Naive thymus-derived CD4-positive, alpha-beta T cell (primary cell): ENCODE measurements at regions of chr6 and their contacts with region 1.

Region 1: GRCh38 chr6:131199568-131200272 is 64.5 kb downstream of the AKAP7 start:
- DNase-seq: peak; percentile 37 to 92 (median 88)
- ATAC-seq: peak; percentile 99
- H3K4me3 ChIP-seq: peak overlapping the region; percentile 44
- H3K4me3 Mint-ChIP-seq: peak overlapping the region; percentile 69 to 87 (median 82)
- H3K27ac ChIP-seq: peak overlapping the region; percentile 79
- H3K27ac Mint-ChIP-seq: peak overlapping the region; percentile 91 to 99 (median 97)
- H3K4me1 ChIP-seq: peaks cover 45 to 57% of the 10 kb centered on the region in 2 donors
- H3K4me1 Mint-ChIP-seq: peaks cover 37 to 71% (median 61%) of the 10 kb centered on the region in 7 donors
- H3K27me3 ChIP-seq: no peaks in the 10 kb centered on the region
- H3K27me3 Mint-ChIP-seq: no peaks in the 10 kb centered on the region

Region 2: DNA sequence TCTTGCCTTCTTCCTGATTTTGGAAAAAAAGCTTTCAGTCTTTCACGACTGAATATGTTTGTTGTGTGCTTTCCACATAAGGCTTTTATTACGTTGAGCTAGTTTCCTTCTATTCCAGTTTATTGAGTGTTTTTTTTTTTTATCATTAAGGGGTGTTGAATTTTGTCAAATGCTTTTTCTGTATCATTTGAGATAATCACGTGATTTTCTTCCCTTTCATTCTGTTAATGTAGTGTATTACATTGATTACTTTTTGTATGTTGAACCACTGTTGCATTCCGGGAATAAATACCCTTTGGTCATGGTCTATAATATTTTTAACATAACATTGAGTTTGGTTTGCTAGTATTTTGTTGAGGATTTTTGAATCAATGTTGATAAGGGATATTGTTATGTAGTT is 395.9 kb before region 1 on chr6:
- CTCF ChIA-PET with region 1: no interaction called
- POLR2A ChIA-PET with region 1: no interaction called
- intact Hi-C with region 1: no loop called
- DNase-seq: no peak
- ATAC-seq: no peak
- H3K4me3 ChIP-seq: no peak overlapping the region
- H3K4me3 Mint-ChIP-seq: no peak overlapping the region
- H3K27ac ChIP-seq: no peak overlapping the region
- H3K27ac Mint-ChIP-seq: peak overlapping the region in 1 of 9 donors; percentile 11
- H3K4me1 ChIP-seq: no peaks in the 10 kb centered on the region
- H3K4me1 Mint-ChIP-seq: no peaks in the 10 kb centered on the region
- H3K27me3 ChIP-seq: peaks cover 0 to 3% of the 10 kb centered on the region in 2 donors
- H3K27me3 Mint-ChIP-seq: peaks cover 0 to 18% (median 8%) of the 10 kb centered on the region in 5 donors

Region 3: DNA sequence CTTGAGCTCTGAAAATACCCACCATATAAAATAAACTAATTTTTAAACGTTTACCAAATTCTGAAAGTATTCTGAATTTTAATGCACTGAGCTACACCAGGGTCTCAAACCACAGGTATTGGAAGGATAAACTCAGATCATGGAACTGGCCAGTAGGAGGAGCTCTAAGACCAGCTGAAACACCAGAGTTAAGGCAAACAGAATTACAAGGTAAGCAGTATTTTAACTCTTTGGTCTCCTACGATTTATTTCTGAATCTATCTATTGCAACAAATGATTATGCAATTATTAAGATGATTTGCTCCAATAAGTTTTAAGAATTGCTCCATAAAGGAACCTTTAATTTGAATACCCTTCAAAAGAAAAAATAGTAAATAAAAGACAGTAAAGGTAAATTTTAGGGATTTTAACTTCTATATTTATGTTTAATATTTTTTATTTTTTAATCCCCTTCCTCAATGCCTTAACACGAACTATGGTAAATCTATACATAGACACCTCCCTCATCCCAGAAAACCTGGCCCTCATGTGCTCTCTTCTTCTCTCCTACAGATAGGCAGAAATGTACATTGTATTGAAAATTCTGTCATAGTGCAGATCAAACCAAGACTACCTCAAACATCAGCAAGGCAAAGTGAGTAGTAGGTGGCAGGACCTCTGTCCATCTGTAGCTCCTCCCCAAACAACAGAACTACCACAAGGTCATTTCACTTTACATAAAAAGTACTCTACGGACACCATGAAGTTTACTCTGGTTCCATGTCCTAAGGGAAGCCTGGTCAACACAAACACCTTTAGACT is 314.1 kb before region 1 on chr6:
- CTCF ChIA-PET with region 1: no interaction called
- POLR2A ChIA-PET with region 1: interaction called, 3 read pairs
- intact Hi-C with region 1: loop called (anchors 1 kb)
- DNase-seq: peak; percentile 27 to 82 (median 73)
- ATAC-seq: peak; percentile 97
- H3K4me3 ChIP-seq: no peak overlapping the region
- H3K4me3 Mint-ChIP-seq: no peak overlapping the region
- H3K27ac ChIP-seq: no peak overlapping the region
- H3K27ac Mint-ChIP-seq: peak overlapping the region in 1 of 9 donors; percentile 3
- H3K4me1 ChIP-seq: no peaks in the 10 kb centered on the region
- H3K4me1 Mint-ChIP-seq: no peaks in the 10 kb centered on the region
- H3K27me3 ChIP-seq: no peaks in the 10 kb centered on the region
- H3K27me3 Mint-ChIP-seq: no peaks in the 10 kb centered on the region

Region 4: GRCh38 chr6:131182991-131183425 is 16.7 kb before region 1 on chr6:
- CTCF ChIA-PET with region 1: interaction called, 36 read pairs
- POLR2A ChIA-PET with region 1: interaction called, 26 read pairs
- intact Hi-C with region 1: loop called (anchors 1 kb)
- DNase-seq: peak in 8 of 9 donors; percentile 6 to 57 (median 47)
- ATAC-seq: peak; percentile 83
- H3K4me3 ChIP-seq: no peak overlapping the region
- H3K4me3 Mint-ChIP-seq: peak overlapping the region; percentile 10 to 85 (median 72)
- H3K27ac ChIP-seq: no peak overlapping the region
- H3K27ac Mint-ChIP-seq: peak overlapping the region; percentile 86 to 98 (median 94)
- H3K4me1 ChIP-seq: peaks cover 0 to 8% of the 10 kb centered on the region in 2 donors
- H3K4me1 Mint-ChIP-seq: peaks cover 5 to 22% (median 17%) of the 10 kb centered on the region in 7 donors
- H3K27me3 ChIP-seq: no peaks in the 10 kb centered on the region
- H3K27me3 Mint-ChIP-seq: no peaks in the 10 kb centered on the region

Region 5: GRCh38 chr6:131281471-131282270 is 82.0 kb after region 1 on chr6:
- CTCF ChIA-PET with region 1: interaction called, 33 read pairs
- POLR2A ChIA-PET with region 1: interaction called, 66 read pairs
- intact Hi-C with region 1: loop called (anchors 1 kb)
- DNase-seq: peak; percentile 24 to 89 (median 83)
- ATAC-seq: peak; percentile 95
- H3K4me3 ChIP-seq: peak overlapping the region; percentile 28
- H3K4me3 Mint-ChIP-seq: peak overlapping the region; percentile 75 to 91 (median 83)
- H3K27ac ChIP-seq: peak overlapping the region; percentile 80
- H3K27ac Mint-ChIP-seq: peak overlapping the region; percentile 96 to 99 (median 98)
- H3K4me1 ChIP-seq: peaks cover 17 to 49% of the 10 kb centered on the region in 2 donors
- H3K4me1 Mint-ChIP-seq: peaks cover 22 to 93% (median 82%) of the 10 kb centered on the region in 7 donors
- H3K27me3 ChIP-seq: no peaks in the 10 kb centered on the region
- H3K27me3 Mint-ChIP-seq: no peaks in the 10 kb centered on the region

Region 6: DNA sequence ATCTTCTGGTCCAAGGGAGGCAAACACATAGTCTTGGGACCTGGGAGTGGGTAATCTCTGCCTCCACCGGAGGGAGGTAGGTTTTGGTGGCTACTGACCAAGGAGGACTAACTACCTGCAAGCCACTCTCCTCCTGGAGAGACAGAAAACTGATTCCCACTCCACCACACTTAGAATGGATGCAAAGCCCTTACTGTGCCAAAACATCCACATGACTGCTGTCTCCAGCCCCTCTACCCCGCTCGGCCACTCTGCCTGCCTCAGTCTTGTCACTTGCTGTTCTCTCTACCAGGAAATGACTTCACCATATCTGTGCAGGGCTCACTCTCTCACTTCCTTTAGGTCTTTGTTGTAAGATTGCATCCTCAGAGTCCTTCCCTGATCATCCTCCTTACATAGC is 243.8 kb after region 1 on chr6:
- CTCF ChIA-PET with region 1: interaction called, 3 read pairs
- POLR2A ChIA-PET with region 1: interaction called, 3 read pairs
- intact Hi-C with region 1: loop called (anchors 2 kb)
- DNase-seq: peak in 7 of 9 donors; percentile 38 to 53 (median 49)
- ATAC-seq: peak; percentile 80
- H3K4me3 ChIP-seq: peak overlapping the region; percentile 70
- H3K4me3 Mint-ChIP-seq: peak overlapping the region; percentile 82 to 97 (median 92)
- H3K27ac ChIP-seq: peak overlapping the region; percentile 60
- H3K27ac Mint-ChIP-seq: peak overlapping the region; percentile 85 to 97 (median 93)
- H3K4me1 ChIP-seq: peaks cover 0 to 18% of the 10 kb centered on the region in 2 donors
- H3K4me1 Mint-ChIP-seq: peaks cover 23 to 91% (median 75%) of the 10 kb centered on the region in 7 donors
- H3K27me3 ChIP-seq: no peaks in the 10 kb centered on the region
- H3K27me3 Mint-ChIP-seq: no peaks in the 10 kb centered on the region

Region 7: GRCh38 chr6:131532580-131533039 is 332.9 kb after region 1 on chr6:
- CTCF ChIA-PET with region 1: interaction called, 78 read pairs
- POLR2A ChIA-PET with region 1: interaction called, 88 read pairs
- intact Hi-C with region 1: loop called (anchors 1 kb)
- DNase-seq: peak in 1 of 9 donors; percentile 34
- ATAC-seq: peak; percentile 31
- H3K4me3 ChIP-seq: no peak overlapping the region
- H3K4me3 Mint-ChIP-seq: peak overlapping the region in 4 of 10 donors; percentile 7 to 49 (median 24)
- H3K27ac ChIP-seq: peak overlapping the region; percentile 51
- H3K27ac Mint-ChIP-seq: peak overlapping the region; percentile 1 to 94 (median 85)
- H3K4me1 ChIP-seq: peaks cover 4 to 34% of the 10 kb centered on the region in 2 donors
- H3K4me1 Mint-ChIP-seq: peaks cover 31 to 71% (median 62%) of the 10 kb centered on the region in 7 donors
- H3K27me3 ChIP-seq: no peaks in the 10 kb centered on the region
- H3K27me3 Mint-ChIP-seq: peaks cover 0 to 23% (median 4%) of the 10 kb centered on the region in 5 donors

Region 8: GRCh38 chr6:131909408-131910218 is 709.9 kb after region 1 on chr6:
- CTCF ChIA-PET with region 1: no interaction called
- POLR2A ChIA-PET with region 1: no interaction called
- intact Hi-C with region 1: loop called in 1 of 2 experiments (anchors 2 kb)
- DNase-seq: peak; percentile 23 to 72 (median 62)
- ATAC-seq: peak; percentile 95
- H3K4me3 ChIP-seq: no peak overlapping the region
- H3K4me3 Mint-ChIP-seq: peak overlapping the region in 4 of 10 donors; percentile 16 to 42 (median 36)
- H3K27ac ChIP-seq: no peak overlapping the region
- H3K27ac Mint-ChIP-seq: peak overlapping the region in 3 of 9 donors; percentile 2 to 22 (median 5)
- H3K4me1 ChIP-seq: peaks cover 0 to 5% of the 10 kb centered on the region in 2 donors
- H3K4me1 Mint-ChIP-seq: peaks cover 6 to 8% (median 8%) of the 10 kb centered on the region in 7 donors
- H3K27me3 ChIP-seq: peaks cover 0 to 4% of the 10 kb centered on the region in 2 donors
- H3K27me3 Mint-ChIP-seq: peaks cover 11 to 38% (median 32%) of the 10 kb centered on the region in 5 donors